ENCODE measurements at regions of chr11 and their contacts with region 1.

Region 1: DNA sequence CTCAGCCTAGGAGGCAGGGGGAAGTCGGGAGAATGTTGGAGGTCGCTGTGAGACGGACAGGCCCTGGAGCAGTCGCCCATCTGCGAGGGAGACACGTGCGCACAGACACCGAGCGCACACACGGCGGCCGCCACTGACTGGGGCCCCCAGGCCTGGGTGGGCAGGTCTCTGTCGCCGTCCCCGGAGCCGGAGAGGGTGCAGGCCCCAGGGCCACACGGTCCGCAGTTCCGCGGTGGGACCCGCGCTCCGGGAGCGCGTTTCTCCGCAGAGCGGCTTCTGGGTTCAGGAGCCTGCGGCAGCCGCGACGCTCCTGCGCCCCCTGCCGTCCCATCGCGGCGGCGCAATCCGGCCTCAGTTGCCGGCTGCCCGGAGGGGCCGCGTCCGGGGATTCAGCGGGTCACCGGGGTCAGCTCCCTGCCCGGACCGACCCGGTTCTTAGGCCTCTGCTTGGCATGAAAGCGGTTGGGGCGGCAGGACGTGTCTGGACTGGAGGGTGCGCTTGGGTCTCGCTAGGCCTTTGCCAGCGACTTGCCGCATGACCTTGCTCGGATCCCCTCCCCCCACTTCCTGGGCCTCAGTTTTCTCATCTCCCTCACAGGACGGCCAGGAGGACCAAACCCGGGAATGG is 31.2 kb downstream of the PDE2A start:
- DNase-seq: peak; percentile 75
- H3K4me3 Mint-ChIP-seq: no peak overlapping the region
- H3K27ac Mint-ChIP-seq: peak overlapping the region; percentile 59
- H3K4me1 Mint-ChIP-seq: peaks cover 9% of the 10 kb centered on the region
- H3K27me3 Mint-ChIP-seq: peaks cover 2% of the 10 kb centered on the region
- CTCF ChIP-seq: peak; percentile 93

Region 2: DNA sequence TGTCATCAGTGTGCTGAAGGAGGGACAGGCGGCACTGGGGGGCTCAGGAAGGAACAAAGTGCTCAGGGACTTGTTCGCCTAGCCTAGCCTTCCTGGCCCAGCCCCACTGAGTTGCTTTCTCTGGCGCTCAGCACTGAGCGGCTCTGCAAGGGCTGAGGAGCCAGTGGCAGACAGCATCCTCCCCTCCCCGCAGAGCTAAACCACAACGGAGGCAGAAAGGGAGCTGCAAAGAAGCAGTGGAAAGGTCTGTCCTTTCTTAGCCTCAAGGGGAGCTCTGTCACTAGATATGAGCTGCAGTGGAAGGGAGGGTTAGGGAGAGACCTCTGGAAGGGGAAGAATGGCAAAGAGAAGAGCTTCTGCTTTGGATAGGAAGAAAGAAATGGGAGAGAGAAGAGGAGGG is 309.3 kb before region 1 on chr11:
- CTCF ChIA-PET with region 1: no interaction called
- intact Hi-C with region 1: no loop called
- DNase-seq: no peak
- H3K4me3 Mint-ChIP-seq: no peak overlapping the region
- H3K27ac Mint-ChIP-seq: no peak overlapping the region
- H3K4me1 Mint-ChIP-seq: no peaks in the 10 kb centered on the region
- H3K27me3 Mint-ChIP-seq: no peaks in the 10 kb centered on the region
- CTCF ChIP-seq: no peak

Region 3: DNA sequence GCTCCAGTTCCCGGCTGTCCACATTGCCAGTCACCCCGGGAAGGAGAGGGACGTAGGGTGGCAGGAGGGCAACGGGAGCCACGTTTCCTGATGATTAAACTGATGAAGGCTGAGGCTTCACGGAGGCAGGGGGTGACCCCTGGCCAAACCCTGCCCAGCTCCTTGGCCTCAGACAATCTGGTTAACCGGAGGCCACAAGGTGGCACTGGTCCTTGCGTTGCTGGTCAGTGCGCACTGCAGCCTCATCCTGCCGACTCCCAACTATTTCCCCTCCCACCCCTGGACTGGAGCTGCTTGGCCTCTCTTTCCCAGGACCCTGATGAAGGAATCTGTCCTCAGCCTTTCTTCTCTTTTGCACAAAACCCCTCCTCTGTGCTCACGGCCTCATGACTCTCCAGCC is 44.1 kb before region 1 on chr11:
- CTCF ChIA-PET with region 1: interaction called, 10 read pairs
- intact Hi-C with region 1: no loop called
- DNase-seq: peak; percentile 62
- H3K4me3 Mint-ChIP-seq: no peak overlapping the region
- H3K27ac Mint-ChIP-seq: no peak overlapping the region
- H3K4me1 Mint-ChIP-seq: peaks cover 13% of the 10 kb centered on the region
- H3K27me3 Mint-ChIP-seq: peaks cover 100% of the 10 kb centered on the region
- CTCF ChIP-seq: peak; percentile 56

Region 4: GRCh38 chr11:72609045-72609444 is 34.0 kb before region 1 on chr11:
- CTCF ChIA-PET with region 1: interaction called, 7 read pairs
- intact Hi-C with region 1: loop called (anchors 5 kb)
- DNase-seq: no peak
- H3K4me3 Mint-ChIP-seq: no peak overlapping the region
- H3K27ac Mint-ChIP-seq: no peak overlapping the region
- H3K4me1 Mint-ChIP-seq: no peaks in the 10 kb centered on the region
- H3K27me3 Mint-ChIP-seq: peaks cover 100% of the 10 kb centered on the region
- CTCF ChIP-seq: peak; percentile 59